Prostate gland (tissue), 2 donors: ENCODE measurements at regions of chr18 and their contacts with region 1.

Region 1: GRCh38 chr18:54983041-54983686 is 23.9 kb upstream of the CCDC68 start:
- DNase-seq: no peak
- H3K4me3 ChIP-seq: no peak overlapping the region
- H3K27ac ChIP-seq: no peak overlapping the region
- H3K4me1 ChIP-seq: no peaks in the 10 kb centered on the region
- H3K27me3 ChIP-seq: no peaks in the 10 kb centered on the region
- CTCF ChIP-seq: peak; percentile 52 to 79 (median 74)
- POLR2A ChIP-seq: no peak

Region 2: DNA sequence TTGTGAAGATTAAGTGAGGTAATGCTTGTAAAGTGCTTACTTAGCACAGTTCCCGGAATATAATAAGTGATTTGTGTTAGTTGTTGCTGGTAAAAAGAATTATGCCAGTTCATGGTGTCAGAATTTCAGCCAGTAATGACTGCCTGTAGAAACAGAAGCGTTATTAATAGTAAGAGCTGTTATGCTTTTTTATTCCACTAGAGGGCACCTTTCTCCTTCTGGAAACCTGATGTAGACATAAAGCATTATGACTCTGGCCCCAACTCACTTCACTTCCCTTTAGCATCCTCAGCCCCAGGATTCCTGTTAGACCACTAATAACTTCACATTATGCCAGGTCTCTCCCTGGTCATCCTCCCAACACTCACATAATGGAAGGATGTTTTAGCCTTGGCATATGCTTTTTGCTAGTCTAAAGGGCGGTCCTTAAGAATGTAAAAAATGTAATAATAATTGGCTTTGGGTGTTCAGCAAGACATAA is 590.6 kb before region 1 on chr18:
- intact Hi-C with region 1: loop called (anchors 10 kb)
- DNase-seq: no peak
- H3K4me3 ChIP-seq: no peak overlapping the region
- H3K27ac ChIP-seq: no peak overlapping the region
- H3K4me1 ChIP-seq: no peaks in the 10 kb centered on the region
- H3K27me3 ChIP-seq: no peaks in the 10 kb centered on the region
- CTCF ChIP-seq: peak; percentile 45 to 68 (median 61)
- POLR2A ChIP-seq: no peak

Region 3: DNA sequence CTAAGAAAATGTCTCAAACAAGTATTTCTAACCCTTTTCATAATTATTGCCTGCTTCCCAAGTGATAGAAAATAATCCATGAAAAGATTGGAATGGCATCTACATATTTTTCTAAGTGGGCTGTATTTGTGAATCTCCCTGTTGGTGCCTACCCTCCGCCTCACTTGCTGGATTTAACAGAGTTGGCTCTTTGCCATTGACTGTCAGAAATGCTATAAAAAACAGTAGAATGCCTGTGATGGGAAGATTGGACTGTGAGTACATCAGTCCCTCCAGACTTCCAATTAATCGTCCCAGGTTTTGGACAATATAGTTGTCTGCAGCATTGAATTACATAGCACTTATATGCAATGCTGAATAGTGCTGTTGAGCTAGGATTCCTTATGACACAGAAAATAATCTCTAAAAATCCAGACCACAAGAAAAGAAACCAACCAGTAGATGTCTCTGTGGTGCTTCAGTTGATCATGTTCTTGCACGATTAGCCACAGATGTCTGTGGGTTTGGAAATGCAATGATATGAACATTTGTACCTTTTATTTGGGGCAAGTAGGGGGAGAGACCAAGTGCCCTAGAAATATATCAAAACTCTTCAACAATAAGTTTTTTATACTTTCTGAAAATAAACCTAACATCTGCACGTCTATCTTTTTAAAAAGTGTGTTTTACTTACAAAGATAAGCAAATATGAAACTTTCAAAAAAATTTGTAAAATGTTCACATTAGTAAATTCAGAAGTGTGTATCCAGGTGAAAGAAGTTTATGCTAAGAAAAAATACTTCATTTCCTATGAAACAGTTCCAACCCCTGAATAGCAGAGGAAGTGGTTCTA is 303.6 kb before region 1 on chr18:
- intact Hi-C with region 1: loop called (anchors 5 kb)
- DNase-seq: peak; percentile 39
- H3K4me3 ChIP-seq: no peak overlapping the region
- H3K27ac ChIP-seq: no peak overlapping the region
- H3K4me1 ChIP-seq: no peaks in the 10 kb centered on the region
- H3K27me3 ChIP-seq: no peaks in the 10 kb centered on the region
- CTCF ChIP-seq: peak in 3 of 4 experiments; percentile 59 to 65 (median 62)
- POLR2A ChIP-seq: no peak

Region 4: DNA sequence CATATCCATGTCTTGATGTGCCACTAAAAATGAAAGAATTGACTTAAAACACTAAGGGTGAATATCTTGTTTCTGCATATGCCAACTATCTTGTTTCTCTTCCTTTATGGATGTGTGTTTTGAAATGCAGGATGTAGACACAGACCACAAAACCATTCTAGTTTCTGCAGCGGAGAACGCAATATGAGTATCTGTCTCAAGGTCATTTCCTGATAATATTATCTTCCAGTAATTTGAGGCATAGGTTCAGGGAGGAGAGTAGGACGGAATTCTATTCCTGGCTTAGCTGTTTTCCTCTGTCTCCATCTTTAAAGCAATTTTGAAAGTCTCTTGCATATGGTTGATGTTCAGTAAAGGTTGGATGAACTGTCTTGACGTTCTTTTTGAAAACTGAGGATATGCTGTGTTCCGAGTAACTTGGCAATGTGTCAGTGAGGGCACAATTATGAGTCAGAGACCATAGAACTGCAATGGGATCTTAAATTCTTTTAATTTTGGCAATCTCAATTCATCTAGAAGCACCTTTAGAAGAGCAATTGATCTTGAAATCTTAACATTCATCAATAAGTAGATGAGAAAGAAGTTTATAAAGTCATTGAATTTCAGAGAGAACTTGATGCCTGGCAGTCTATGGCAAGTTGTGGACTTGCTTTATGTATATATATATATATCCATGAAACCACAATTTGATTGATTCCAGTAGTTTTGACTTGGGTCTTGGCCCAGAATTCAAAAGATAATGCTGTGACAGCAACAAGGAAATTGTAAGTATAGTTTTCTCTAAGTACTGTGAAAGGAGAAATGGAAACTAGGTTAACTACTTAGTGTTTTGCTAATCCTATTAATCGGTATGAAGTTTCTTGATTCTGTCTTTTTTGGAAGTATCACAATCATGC is 130.1 kb before region 1 on chr18:
- intact Hi-C with region 1: no loop called
- DNase-seq: no peak
- H3K4me3 ChIP-seq: no peak overlapping the region
- H3K27ac ChIP-seq: no peak overlapping the region
- H3K4me1 ChIP-seq: no peaks in the 10 kb centered on the region
- H3K27me3 ChIP-seq: no peaks in the 10 kb centered on the region
- CTCF ChIP-seq: no peak
- POLR2A ChIP-seq: no peak